Activated CD8-positive, alpha-beta memory T cell treated with anti-CD3 and anti-CD28 coated beads, Interleukin-2, amount 10 ng/mL, durations not matched to agents 7 days and 5 days (primary cell): ENCODE measurements at regions of chr7 and their contacts with region 1.

Region 1: GRCh38 chr7:108146070-108146837 is 16.1 kb upstream of the LAMB4 start:
- DNase-seq: peak; percentile 61
- ATAC-seq: peak; percentile 39
- H3K4me3 Mint-ChIP-seq: no peak overlapping the region
- H3K27ac Mint-ChIP-seq: no peak overlapping the region
- H3K4me1 Mint-ChIP-seq: no peaks in the 10 kb centered on the region
- H3K27me3 Mint-ChIP-seq: peaks cover 45% of the 10 kb centered on the region

Region 2: GRCh38 chr7:108114117-108114841 is 32.0 kb before region 1 on chr7:
- CTCF ChIA-PET with region 1: interaction called, 25 read pairs
- DNase-seq: no peak
- ATAC-seq: no peak
- H3K4me3 Mint-ChIP-seq: no peak overlapping the region
- H3K27ac Mint-ChIP-seq: no peak overlapping the region
- H3K4me1 Mint-ChIP-seq: no peaks in the 10 kb centered on the region
- H3K27me3 Mint-ChIP-seq: peaks cover 6% of the 10 kb centered on the region

Region 3: GRCh38 chr7:108135446-108136190 is 10.6 kb before region 1 on chr7:
- CTCF ChIA-PET with region 1: interaction called, 10 read pairs
- DNase-seq: peak; percentile 68
- ATAC-seq: peak; percentile 94
- H3K4me3 Mint-ChIP-seq: no peak overlapping the region
- H3K27ac Mint-ChIP-seq: peak overlapping the region; percentile 3
- H3K4me1 Mint-ChIP-seq: peaks cover 18% of the 10 kb centered on the region
- H3K27me3 Mint-ChIP-seq: peaks cover 73% of the 10 kb centered on the region